ENCODE measurements at regions of chr22 and their contacts with region 1.

Region 1: GRCh38 chr22:50030297-50031188 is 18.0 kb upstream of the IL17REL start:
- DNase-seq: peak; percentile 93
- ATAC-seq: peak; percentile 93
- H3K4me3 Mint-ChIP-seq: no peak overlapping the region
- H3K27ac Mint-ChIP-seq: no peak overlapping the region
- H3K4me1 Mint-ChIP-seq: no peaks in the 10 kb centered on the region
- H3K27me3 Mint-ChIP-seq: peaks cover 20% of the 10 kb centered on the region
- CTCF ChIP-seq: peak; percentile 63; the same call in 1 of the 2 replicates

Region 2: DNA sequence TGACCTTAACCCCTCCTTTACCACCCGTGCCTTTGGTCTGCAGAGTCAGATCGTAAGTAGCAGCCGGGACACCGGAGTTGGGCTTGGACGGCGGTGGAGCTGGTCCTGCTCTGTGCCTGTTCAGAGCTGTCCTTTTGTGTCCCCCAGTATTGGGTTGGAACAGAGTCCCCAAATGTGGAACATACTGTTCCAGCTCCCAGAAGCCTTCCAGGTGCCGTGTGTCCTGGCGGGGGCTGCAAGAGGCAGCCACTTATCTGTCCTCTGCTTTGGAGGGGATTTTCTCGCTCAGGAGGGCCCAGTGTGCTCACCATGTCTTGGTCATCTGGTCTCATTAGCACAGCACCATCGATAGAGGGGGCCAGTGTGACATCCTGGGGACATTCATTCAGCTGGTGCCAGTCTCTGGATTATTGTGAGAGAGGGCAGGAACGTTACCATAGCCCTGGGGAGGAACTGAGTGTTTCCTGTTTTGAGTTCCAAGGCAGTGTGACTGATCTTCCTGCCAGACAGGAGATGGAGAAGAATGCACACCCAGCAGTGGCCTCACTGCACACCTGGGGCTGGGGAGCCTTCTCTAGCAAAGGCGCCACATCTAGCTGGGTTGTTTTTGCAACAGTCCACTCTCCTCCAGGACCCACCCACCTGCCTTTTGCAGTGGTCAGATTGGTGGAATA is 99.7 kb before region 1 on chr22:
- CTCF ChIA-PET with region 1: interaction called, 75 read pairs
- POLR2A ChIA-PET with region 1: interaction called, 4 read pairs
- DNase-seq: no peak
- ATAC-seq: no peak
- H3K4me3 Mint-ChIP-seq: no peak overlapping the region
- H3K27ac Mint-ChIP-seq: 0 out of 2 replicates have a peak overlapping the region, but pooled peaks have one; percentile 6
- H3K4me1 Mint-ChIP-seq: peaks cover 6% of the 10 kb centered on the region
- H3K27me3 Mint-ChIP-seq: peaks cover 12% of the 10 kb centered on the region; the same call in 1 of the 2 replicates
- CTCF ChIP-seq: no peak

Region 3: DNA sequence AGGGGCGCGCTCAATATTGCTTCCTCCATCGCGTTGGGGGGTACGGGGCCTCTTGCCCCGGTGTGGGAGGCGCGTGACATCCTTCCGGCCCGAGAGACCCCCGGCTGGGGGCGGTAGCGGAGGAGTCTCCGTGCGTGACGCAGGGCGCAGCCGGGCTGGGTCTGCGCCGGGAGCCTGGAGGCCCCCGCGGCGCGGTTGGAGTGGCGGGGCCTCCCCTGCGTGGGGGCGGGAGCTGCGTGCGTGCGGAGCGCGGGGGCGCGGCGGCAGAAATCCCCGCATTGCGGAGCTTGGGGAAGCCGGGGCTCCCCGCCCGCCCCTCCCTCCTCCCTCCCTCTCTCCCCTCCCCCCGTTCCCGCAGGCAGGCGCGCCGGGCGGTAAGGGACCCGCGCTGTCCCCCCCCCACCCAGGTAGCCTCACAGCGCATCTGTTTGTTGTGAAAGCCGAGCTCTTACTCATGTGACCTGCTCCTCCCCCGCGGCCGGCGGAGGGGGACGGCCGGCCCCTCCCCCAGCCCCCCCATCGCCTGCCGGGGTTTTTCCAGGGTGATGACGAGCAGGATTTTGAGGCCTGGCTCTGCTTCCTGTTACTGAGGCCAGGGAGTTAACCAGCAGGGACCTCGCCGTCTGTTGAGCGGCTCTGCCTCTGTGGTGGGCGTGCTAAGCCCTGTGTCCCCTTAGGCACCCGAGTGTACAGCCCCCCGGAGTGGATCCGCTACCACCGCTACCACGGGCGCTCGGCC is 68.4 kb before region 1 on chr22:
- CTCF ChIA-PET with region 1: interaction called, 17 read pairs
- POLR2A ChIA-PET with region 1: no interaction called
- DNase-seq: peak; percentile 77
- ATAC-seq: no peak; the same call in 1 of the 2 replicates
- H3K4me3 Mint-ChIP-seq: peak overlapping the region; percentile 81
- H3K27ac Mint-ChIP-seq: no peak overlapping the region; the same call in 1 of the 2 replicates
- H3K4me1 Mint-ChIP-seq: peaks cover 5% of the 10 kb centered on the region; the same call in 1 of the 2 replicates
- H3K27me3 Mint-ChIP-seq: no peaks in the 10 kb centered on the region; the same call in 1 of the 2 replicates
- CTCF ChIP-seq: no peak

Region 4: GRCh38 chr22:49992921-49993648 is 37.5 kb before region 1 on chr22:
- CTCF ChIA-PET with region 1: interaction called, 50 read pairs
- POLR2A ChIA-PET with region 1: no interaction called
- DNase-seq: peak; percentile 72
- ATAC-seq: peak; percentile 90
- H3K4me3 Mint-ChIP-seq: no peak overlapping the region
- H3K27ac Mint-ChIP-seq: no peak overlapping the region
- H3K4me1 Mint-ChIP-seq: no peaks in the 10 kb centered on the region
- H3K27me3 Mint-ChIP-seq: peaks cover 28% of the 10 kb centered on the region
- CTCF ChIP-seq: peak; percentile 55

Region 5: DNA sequence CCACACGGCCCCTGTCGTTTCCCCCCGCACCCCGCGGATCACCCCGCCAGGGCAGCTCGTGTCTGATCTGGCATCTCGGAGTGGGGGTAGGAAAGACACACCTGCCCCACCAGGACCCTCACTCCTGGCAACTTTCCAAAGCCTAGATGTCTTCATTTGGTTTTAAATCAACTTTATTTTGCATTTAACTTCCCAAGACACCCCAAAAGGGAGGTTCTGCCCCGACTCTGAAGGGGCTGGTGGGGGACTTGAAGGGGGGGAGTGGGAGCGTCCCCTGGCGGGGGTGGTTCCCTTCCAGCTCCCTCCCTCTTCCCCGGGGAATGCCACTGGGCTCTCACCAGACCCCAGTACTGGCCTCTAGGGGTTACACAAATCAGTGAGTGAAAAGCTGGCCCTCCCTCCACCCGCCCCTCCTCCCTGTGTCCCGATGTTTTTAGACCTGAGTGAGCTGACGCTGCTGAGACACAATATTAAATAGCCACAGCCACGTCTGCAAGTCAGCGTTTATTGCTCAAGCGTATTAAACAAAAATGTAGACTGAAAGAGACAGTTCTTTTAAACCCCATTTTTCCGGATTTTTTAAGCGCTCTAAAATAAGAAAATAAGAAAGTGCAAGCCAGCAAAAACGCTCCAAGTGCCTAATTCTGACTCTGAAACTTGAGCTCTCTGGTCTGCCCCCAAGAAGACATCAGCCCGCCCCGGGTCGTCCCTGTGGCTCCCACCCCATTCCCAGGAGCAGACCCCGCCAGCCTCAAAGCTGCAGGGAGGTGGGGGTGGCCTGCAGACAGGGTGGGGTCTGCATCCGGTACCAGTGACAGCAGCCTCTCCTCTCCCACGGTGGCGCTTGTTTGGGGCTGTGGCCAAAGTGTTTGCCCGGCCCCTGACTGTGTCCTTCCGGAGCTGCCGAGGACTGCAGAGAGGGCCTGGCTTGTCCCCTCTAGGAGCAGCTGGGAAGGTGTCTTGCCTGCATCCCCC is 28.6 kb after region 1 on chr22:
- CTCF ChIA-PET with region 1: interaction called, 22 read pairs
- POLR2A ChIA-PET with region 1: no interaction called
- DNase-seq: peak; percentile 59
- ATAC-seq: peak; percentile 74
- H3K4me3 Mint-ChIP-seq: peak overlapping the region; percentile 68
- H3K27ac Mint-ChIP-seq: no peak overlapping the region
- H3K4me1 Mint-ChIP-seq: peaks cover 12% of the 10 kb centered on the region
- H3K27me3 Mint-ChIP-seq: peaks cover 22% of the 10 kb centered on the region
- CTCF ChIP-seq: no peak

Region 6: GRCh38 chr22:50184004-50184543 is 153.5 kb after region 1 on chr22:
- CTCF ChIA-PET with region 1: no interaction called
- POLR2A ChIA-PET with region 1: no interaction called
- DNase-seq: no peak
- ATAC-seq: peak; percentile 2; the same call in 1 of the 2 replicates
- H3K4me3 Mint-ChIP-seq: peak overlapping the region; percentile 78
- H3K27ac Mint-ChIP-seq: no peak overlapping the region
- H3K4me1 Mint-ChIP-seq: peaks cover 6% of the 10 kb centered on the region
- H3K27me3 Mint-ChIP-seq: no peaks in the 10 kb centered on the region; the same call in 1 of the 2 replicates
- CTCF ChIP-seq: no peak